Thyroid gland (tissue), 4 donors: ENCODE measurements at regions of chr4 and their contacts with region 1.

Region 1: DNA sequence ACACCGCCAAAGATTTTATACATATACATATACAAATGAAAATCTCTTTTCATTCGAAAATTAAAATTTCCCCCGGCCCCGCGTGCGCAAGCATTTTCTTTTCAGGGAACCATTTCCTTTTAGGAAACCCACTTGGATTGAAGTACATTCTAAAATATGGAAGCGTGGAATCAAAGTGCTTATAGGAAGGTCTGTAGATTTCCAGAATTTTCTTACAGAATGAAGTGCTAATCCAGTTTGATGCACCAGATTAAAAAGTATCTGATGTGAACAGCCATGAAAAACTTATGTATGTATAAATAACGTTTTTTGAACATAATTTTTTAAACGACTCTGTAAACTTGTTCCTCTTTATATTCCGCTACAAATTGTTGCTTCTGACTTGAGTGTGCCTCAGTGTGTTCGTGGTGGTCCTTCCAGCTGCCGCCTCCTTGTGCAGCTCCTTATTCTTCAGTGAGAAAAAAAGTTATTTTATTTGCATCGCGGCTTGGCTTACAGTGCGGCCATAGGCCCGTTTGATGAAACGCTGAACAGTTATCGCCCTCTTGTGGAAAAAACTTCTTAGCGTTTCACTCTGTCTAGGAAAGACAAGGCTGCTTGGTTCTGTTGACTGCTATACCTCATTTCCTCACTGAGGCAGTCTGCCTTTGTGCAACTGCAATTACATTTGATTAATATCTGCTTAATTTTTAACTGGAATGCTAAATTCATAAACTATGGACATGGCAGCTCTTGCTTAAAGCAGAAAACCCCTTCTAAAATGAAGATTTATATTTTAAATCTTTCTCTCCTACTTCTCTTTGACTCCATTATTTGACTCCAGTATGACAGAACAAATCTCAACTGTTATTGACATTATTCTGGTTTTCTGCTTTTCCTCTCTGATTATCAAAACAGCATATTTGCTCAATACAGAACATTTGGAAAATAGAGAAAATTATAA is 4.7 kb upstream of the NKX6-1 start:
- DNase-seq: peak in 1 of 2 donors; percentile 20
- H3K4me3 ChIP-seq: no peak overlapping the region
- H3K27ac ChIP-seq: no peak overlapping the region
- H3K4me1 ChIP-seq: peaks cover 0 to 13% of the 10 kb centered on the region in 2 donors
- H3K27me3 ChIP-seq: no peaks in the 10 kb centered on the region
- CTCF ChIP-seq: peak; percentile 30 to 74 (median 66)
- POLR2A ChIP-seq: no peak

Region 2: GRCh38 chr4:83503974-83504373 is 999.8 kb before region 1 on chr4:
- intact Hi-C with region 1: loop called (anchors 10 kb)
- DNase-seq: no peak
- H3K4me3 ChIP-seq: no peak overlapping the region
- H3K27ac ChIP-seq: peak overlapping the region in 2 of 3 donors; percentile 22 to 26
- H3K4me1 ChIP-seq: peaks cover 0 to 8% of the 10 kb centered on the region in 2 donors
- H3K27me3 ChIP-seq: no peaks in the 10 kb centered on the region
- CTCF ChIP-seq: no peak
- POLR2A ChIP-seq: no peak

Region 3: GRCh38 chr4:83639849-83640493 is 863.8 kb before region 1 on chr4:
- intact Hi-C with region 1: loop called (anchors 10 kb)
- DNase-seq: peak; percentile 49 to 51
- H3K4me3 ChIP-seq: no peak overlapping the region
- H3K27ac ChIP-seq: peak overlapping the region in 1 of 3 donors; percentile 33
- H3K4me1 ChIP-seq: peaks cover 3 to 14% of the 10 kb centered on the region in 2 donors
- H3K27me3 ChIP-seq: no peaks in the 10 kb centered on the region
- CTCF ChIP-seq: peak; percentile 27 to 97 (median 87)
- POLR2A ChIP-seq: no peak

Region 4: DNA sequence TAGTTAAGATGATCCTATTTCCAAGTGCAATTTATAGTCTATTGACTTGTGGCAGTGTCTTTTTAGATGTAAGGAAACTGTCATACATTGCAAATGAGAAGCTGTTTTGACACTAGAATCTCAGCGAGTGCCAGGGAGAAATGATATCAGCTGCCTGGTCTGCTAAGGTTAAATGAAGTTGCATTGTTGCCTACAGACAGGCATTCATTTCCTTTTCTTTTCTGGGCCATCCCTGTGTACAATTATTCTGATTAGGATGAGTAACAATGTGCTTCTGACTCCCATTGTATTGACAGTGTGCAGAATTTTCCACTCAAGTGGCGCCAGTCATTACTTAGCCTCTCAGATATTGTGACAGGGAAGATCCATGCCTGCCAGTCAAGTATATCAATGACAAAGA is 736.7 kb before region 1 on chr4:
- intact Hi-C with region 1: loop called (anchors 10 kb)
- DNase-seq: no peak
- H3K4me3 ChIP-seq: no peak overlapping the region
- H3K27ac ChIP-seq: no peak overlapping the region
- H3K4me1 ChIP-seq: no peaks in the 10 kb centered on the region
- H3K27me3 ChIP-seq: no peaks in the 10 kb centered on the region
- CTCF ChIP-seq: no peak
- POLR2A ChIP-seq: no peak

Region 5: DNA sequence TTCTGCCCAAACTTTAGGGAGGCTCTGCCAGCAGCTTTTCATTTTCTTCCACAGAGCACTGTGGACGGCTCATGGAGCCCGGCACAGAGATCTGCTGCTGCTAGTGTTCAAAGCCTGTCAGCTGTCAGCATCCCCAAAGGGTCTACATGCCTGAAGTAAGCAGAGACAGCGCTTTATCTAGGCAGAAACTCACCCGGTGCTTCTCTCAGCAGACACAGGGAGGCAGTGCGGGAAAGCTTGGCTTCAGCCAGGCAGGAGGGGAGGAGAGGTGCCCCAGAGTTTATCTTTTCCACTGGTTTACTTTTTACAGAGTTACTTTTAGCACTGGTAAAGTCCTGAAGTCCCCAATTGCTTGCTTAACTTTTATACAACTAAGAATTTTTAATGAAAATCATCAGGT is 344.0 kb before region 1 on chr4:
- intact Hi-C with region 1: loop called (anchors 10 kb)
- DNase-seq: peak; percentile 42 to 59
- H3K4me3 ChIP-seq: no peak overlapping the region
- H3K27ac ChIP-seq: no peak overlapping the region
- H3K4me1 ChIP-seq: peaks cover 8 to 13% of the 10 kb centered on the region in 2 donors
- H3K27me3 ChIP-seq: no peaks in the 10 kb centered on the region
- CTCF ChIP-seq: peak in 4 of 6 experiments; percentile 37 to 67 (median 54)
- POLR2A ChIP-seq: no peak